RWPE1 (cell line): ENCODE measurements at regions of chr5 and their contacts with region 1.

Region 1: GRCh38 chr5:124557761-124558160 is 188.7 kb downstream of the ZNF608 start:
- DNase-seq: no peak
- H3K27ac ChIP-seq: no peak overlapping the region
- CTCF ChIP-seq: no peak

Region 2: GRCh38 chr5:124572971-124573370 is 15.2 kb after region 1 on chr5:
- CTCF ChIA-PET with region 1: interaction called, 12 read pairs
- POLR2A ChIA-PET with region 1: no interaction called
- DNase-seq: no peak
- H3K27ac ChIP-seq: no peak overlapping the region
- CTCF ChIP-seq: no peak